ENCODE measurements at regions of chr12 and their contacts with region 1.

Region 1: GRCh38 chr12:71746983-71747611 is 7.6 kb upstream of the RAB21 start:
- DNase-seq: peak in 1 of 2 donors; percentile 80
- ATAC-seq: peak; percentile 74 to 94 (median 92)
- H3K4me3 ChIP-seq: no peak overlapping the region
- H3K4me3 Mint-ChIP-seq: no peak overlapping the region
- H3K27ac ChIP-seq: no peak overlapping the region
- H3K27ac Mint-ChIP-seq: no peak overlapping the region
- H3K4me1 ChIP-seq: no peaks in the 10 kb centered on the region
- H3K4me1 Mint-ChIP-seq: no peaks in the 10 kb centered on the region
- H3K27me3 ChIP-seq: peaks cover 5% of the 10 kb centered on the region
- H3K27me3 Mint-ChIP-seq: peaks cover 16 to 25% of the 10 kb centered on the region in 2 donors
- CTCF ChIP-seq: peak; percentile 75

Region 2: GRCh38 chr12:70733385-70733784 is 1013.7 kb before region 1 on chr12:
- intact Hi-C with region 1: loop called (anchors 5 kb)
- DNase-seq: peak in 1 of 2 donors; percentile 49
- ATAC-seq: peak in 2 of 3 donors; percentile 78 to 79
- H3K4me3 ChIP-seq: no peak overlapping the region
- H3K4me3 Mint-ChIP-seq: no peak overlapping the region
- H3K27ac ChIP-seq: no peak overlapping the region
- H3K27ac Mint-ChIP-seq: no peak overlapping the region
- H3K4me1 ChIP-seq: no peaks in the 10 kb centered on the region
- H3K4me1 Mint-ChIP-seq: no peaks in the 10 kb centered on the region
- H3K27me3 ChIP-seq: no peaks in the 10 kb centered on the region
- H3K27me3 Mint-ChIP-seq: peaks cover 5 to 12% of the 10 kb centered on the region in 2 donors
- CTCF ChIP-seq: peak; percentile 55

Region 3: GRCh38 chr12:71415336-71416231 is 331.5 kb before region 1 on chr12:
- intact Hi-C with region 1: loop called (anchors 1 kb)
- DNase-seq: peak in 1 of 2 donors; percentile 73
- ATAC-seq: peak in 2 of 3 donors; percentile 34 to 57
- H3K4me3 ChIP-seq: no peak overlapping the region
- H3K4me3 Mint-ChIP-seq: no peak overlapping the region
- H3K27ac ChIP-seq: no peak overlapping the region
- H3K27ac Mint-ChIP-seq: no peak overlapping the region
- H3K4me1 ChIP-seq: no peaks in the 10 kb centered on the region
- H3K4me1 Mint-ChIP-seq: no peaks in the 10 kb centered on the region
- H3K27me3 ChIP-seq: no peaks in the 10 kb centered on the region
- H3K27me3 Mint-ChIP-seq: peaks cover 0 to 8% of the 10 kb centered on the region in 2 donors
- CTCF ChIP-seq: peak; percentile 40

Region 4: DNA sequence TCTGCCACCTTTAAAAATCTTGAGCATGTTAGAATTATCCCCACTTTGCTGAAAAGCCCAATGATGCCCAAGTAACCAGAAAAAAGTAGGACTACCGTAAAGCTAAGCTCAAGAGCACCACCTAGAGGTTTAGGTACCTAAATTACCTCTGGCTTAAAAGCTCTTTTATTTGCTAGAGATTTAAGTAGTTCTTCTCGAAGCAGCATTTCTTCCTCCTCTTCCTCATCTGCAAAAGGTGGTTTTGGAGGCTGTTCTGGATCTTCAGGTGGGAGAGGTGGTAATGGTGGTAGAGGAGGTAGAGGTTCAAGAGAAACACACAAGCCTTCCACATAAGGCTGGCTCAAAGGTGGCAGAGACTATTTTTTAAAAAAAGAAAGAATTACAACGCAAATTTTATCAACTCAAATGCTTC is 110.4 kb before region 1 on chr12:
- intact Hi-C with region 1: loop called (anchors 2 kb)
- DNase-seq: peak in 1 of 2 donors; percentile 80
- ATAC-seq: peak; percentile 66 to 89 (median 76)
- H3K4me3 ChIP-seq: no peak overlapping the region
- H3K4me3 Mint-ChIP-seq: no peak overlapping the region
- H3K27ac ChIP-seq: no peak overlapping the region
- H3K27ac Mint-ChIP-seq: peak overlapping the region; percentile 72 to 80
- H3K4me1 ChIP-seq: no peaks in the 10 kb centered on the region
- H3K4me1 Mint-ChIP-seq: peaks cover 12 to 15% of the 10 kb centered on the region in 2 donors
- H3K27me3 ChIP-seq: no peaks in the 10 kb centered on the region
- H3K27me3 Mint-ChIP-seq: no peaks in the 10 kb centered on the region
- CTCF ChIP-seq: peak; percentile 75